ENCODE measurements at regions of chr7 and their contacts with region 1.

Region 1: GRCh38 chr7:4744391-4745264 is 30.8 kb upstream of the AP5Z1 start:
- DNase-seq: peak; percentile 76
- H3K4me3 Mint-ChIP-seq: peak overlapping the region; percentile 83
- H3K27ac Mint-ChIP-seq: peak overlapping the region; percentile 95
- H3K4me1 Mint-ChIP-seq: peaks cover 48% of the 10 kb centered on the region
- H3K27me3 Mint-ChIP-seq: no peaks in the 10 kb centered on the region

Region 2: GRCh38 chr7:4641667-4642467 is 102.8 kb before region 1 on chr7:
- intact Hi-C with region 1: loop called (anchors 1 kb)
- DNase-seq: peak; percentile 95
- H3K4me3 Mint-ChIP-seq: peak overlapping the region; percentile 92
- H3K27ac Mint-ChIP-seq: peak overlapping the region; percentile 94
- H3K4me1 Mint-ChIP-seq: peaks cover 12% of the 10 kb centered on the region
- H3K27me3 Mint-ChIP-seq: no peaks in the 10 kb centered on the region

Region 3: DNA sequence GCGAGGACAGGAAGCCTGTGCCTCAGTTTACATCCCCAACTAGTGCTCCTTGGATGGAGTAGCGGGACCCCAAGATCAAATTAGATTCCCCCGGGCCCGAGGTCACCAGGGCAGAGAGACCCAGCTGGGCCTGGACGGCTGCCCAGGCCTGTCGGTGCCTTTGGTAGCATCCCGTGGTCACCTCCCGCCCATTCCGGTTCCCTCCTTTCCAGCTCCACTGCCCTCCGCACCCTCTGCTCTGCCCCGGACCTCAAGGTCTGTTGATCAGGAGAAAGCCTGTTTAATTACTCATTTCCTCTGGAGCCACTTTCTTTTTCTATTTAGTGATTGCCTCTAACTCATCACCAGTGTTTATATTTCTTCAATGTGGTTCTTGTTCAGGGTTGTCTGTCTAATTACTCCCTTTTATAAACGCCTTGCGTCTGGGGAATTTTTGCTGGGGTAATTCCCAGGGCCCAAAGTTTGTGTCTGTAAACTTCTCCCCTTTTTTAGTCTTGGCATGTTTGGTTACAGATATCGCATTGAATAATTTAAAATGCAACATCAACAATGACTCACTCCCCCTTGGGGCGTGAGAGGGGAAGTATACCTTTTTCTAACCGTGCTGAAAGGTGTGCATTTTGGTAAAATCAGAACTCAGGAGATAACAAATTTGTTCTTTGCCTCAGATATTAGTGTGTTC is 60.6 kb before region 1 on chr7:
- intact Hi-C with region 1: loop called (anchors 1 kb)
- DNase-seq: peak; percentile 26
- H3K4me3 Mint-ChIP-seq: peak overlapping the region; percentile 91
- H3K27ac Mint-ChIP-seq: peak overlapping the region; percentile 92
- H3K4me1 Mint-ChIP-seq: peaks cover 24% of the 10 kb centered on the region
- H3K27me3 Mint-ChIP-seq: no peaks in the 10 kb centered on the region

Region 4: GRCh38 chr7:4725014-4725849 is 19.4 kb before region 1 on chr7:
- intact Hi-C with region 1: loop called (anchors 2 kb)
- DNase-seq: peak; percentile 60
- H3K4me3 Mint-ChIP-seq: peak overlapping the region; percentile 84
- H3K27ac Mint-ChIP-seq: peak overlapping the region; percentile 83
- H3K4me1 Mint-ChIP-seq: peaks cover 22% of the 10 kb centered on the region
- H3K27me3 Mint-ChIP-seq: no peaks in the 10 kb centered on the region

Region 5: DNA sequence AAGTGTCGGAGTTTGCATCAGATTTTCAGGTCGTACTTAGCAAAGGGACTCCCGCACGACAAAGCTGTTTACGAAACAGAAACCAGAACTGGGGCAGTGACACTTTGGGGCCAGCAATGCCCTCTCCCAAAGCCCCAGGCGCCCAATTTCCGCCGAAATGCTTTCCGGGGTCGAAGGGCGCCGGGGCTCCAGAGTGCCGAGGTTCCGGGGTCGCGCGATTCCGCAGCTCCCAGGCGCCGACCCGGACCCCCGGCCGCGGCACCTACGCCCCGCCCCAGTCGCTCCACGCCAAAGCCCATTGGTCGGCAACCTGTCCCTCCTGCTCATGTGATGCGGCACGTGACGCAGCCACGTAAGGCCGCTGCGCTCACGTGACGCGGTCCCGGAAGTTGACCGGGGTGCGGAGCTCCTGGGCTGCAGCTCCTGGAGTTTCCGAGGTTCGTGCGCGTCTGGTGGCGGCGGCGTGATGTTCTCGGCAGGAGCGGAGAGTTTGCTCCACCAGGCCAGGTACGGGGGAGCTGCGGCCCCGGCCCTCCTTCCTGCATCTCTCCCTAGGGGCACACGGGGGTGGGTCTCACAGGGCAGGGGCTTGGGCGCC is 30.7 kb after region 1 on chr7 and contains the start of gene AP5Z1:
- intact Hi-C with region 1: loop called (anchors 1 kb)
- DNase-seq: peak; percentile 90
- H3K4me3 Mint-ChIP-seq: peak within 1 kb of the TSS; percentile 95
- H3K27ac Mint-ChIP-seq: peak within 1 kb of the TSS; percentile 96
- H3K4me1 Mint-ChIP-seq: peaks cover 31% of the 10 kb centered on the region
- H3K27me3 Mint-ChIP-seq: no peaks in the 10 kb centered on the region
- total RNA-seq, gene AP5Z1: 41.5 and 45.9 TPM in 2 replicates